ENCODE measurements at regions of chr12 and their contacts with region 1.

Region 1: DNA sequence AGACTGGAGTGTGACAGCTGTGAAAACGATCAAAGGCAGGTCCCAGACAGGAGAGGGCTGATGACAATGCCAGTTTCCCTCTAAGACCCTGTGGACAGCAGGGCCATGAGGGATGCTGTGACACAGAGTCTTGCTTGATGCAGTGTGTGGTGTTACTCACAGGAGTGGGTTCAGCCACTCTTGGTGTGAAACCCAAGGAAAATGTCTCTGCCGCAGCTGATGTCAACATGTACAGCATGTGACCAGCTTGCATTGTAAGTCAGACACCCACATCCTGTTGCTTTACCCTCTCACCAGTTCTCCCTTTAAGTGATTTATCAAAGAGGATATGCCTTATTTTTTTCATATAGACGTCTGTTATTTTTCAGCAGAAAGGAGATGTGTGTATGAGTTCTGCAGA is 268.6 kb downstream of the BTG1 start:
- DNase-seq: peak; percentile 75
- H3K4me3 Mint-ChIP-seq: peak overlapping the region; percentile 54
- H3K27ac Mint-ChIP-seq: peak overlapping the region; percentile 94
- H3K4me1 Mint-ChIP-seq: peaks cover 48% of the 10 kb centered on the region
- H3K27me3 Mint-ChIP-seq: no peaks in the 10 kb centered on the region

Region 2: GRCh38 chr12:91687052-91688017 is 189.7 kb before region 1 on chr12:
- intact Hi-C with region 1: loop called (anchors 1 kb)
- DNase-seq: no peak
- H3K4me3 Mint-ChIP-seq: no peak overlapping the region
- H3K27ac Mint-ChIP-seq: peak overlapping the region; percentile 66
- H3K4me1 Mint-ChIP-seq: peaks cover 24% of the 10 kb centered on the region
- H3K27me3 Mint-ChIP-seq: no peaks in the 10 kb centered on the region

Region 3: GRCh38 chr12:91852634-91853033 is 24.4 kb before region 1 on chr12:
- intact Hi-C with region 1: loop called (anchors 1 kb)
- DNase-seq: no peak
- H3K4me3 Mint-ChIP-seq: no peak overlapping the region
- H3K27ac Mint-ChIP-seq: no peak overlapping the region
- H3K4me1 Mint-ChIP-seq: peaks cover 14% of the 10 kb centered on the region
- H3K27me3 Mint-ChIP-seq: peaks cover 2% of the 10 kb centered on the region

Region 4: DNA sequence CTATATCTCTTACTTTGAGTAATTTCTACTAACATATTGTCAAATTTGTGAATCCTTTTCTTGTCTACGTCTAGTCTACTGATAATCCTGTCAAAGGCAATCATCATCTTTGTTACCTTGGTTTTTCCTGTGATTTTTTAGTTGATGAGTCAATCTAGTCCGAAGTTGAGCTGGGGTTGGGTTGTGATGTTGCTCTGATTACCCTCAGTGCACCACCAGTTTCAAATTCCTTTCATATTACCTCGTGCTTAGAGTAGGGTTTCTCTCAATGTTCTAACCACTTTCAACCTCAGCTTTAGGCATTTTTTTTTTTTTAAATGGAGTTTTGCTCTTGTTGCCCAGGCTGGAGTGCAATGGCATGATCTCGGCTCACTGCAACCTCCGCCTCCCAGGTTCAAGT is 81.8 kb after region 1 on chr12:
- intact Hi-C with region 1: no loop called
- DNase-seq: no peak
- H3K4me3 Mint-ChIP-seq: no peak overlapping the region
- H3K27ac Mint-ChIP-seq: no peak overlapping the region
- H3K4me1 Mint-ChIP-seq: peaks cover 4% of the 10 kb centered on the region
- H3K27me3 Mint-ChIP-seq: no peaks in the 10 kb centered on the region

Region 5: DNA sequence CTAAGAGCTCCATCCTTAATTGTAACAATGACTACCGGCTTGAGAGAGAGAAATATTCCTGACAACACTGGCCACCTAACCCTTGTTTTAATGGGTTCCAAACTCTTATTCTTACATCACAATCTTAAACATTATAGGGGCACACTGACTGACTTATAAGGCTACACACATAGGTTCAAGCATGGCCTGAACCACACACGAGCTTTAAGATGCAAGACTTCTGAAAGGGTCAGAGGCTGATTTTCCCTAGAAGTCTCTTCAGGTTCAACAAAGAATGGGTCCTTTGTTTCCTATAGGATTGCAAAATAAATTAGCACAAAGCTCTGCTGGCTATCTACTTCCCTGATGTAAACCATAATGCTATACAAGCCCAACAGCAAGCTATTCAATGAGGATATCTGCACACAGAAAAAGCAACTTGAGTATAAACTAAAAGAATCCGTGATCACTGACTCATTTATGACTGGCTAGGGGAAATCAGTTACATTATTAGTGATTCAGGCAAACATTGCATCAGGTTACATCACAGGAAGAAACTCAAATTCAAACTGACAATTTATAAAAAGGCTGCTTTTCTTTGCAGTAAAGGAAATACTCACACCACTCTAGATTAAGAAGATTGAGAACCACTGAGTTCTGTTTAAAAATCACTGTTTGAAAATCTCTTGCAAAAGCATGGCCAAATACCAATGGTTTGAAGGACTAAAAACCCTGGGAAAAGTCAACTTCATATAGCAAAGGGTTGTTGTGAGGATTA is 260.1 kb after region 1 on chr12:
- intact Hi-C with region 1: loop called (anchors 2 kb)
- DNase-seq: no peak
- H3K4me3 Mint-ChIP-seq: peak overlapping the region; percentile 98
- H3K27ac Mint-ChIP-seq: peak overlapping the region; percentile 87
- H3K4me1 Mint-ChIP-seq: peaks cover 78% of the 10 kb centered on the region
- H3K27me3 Mint-ChIP-seq: no peaks in the 10 kb centered on the region

Region 6: GRCh38 chr12:92593734-92594402 is 716.8 kb after region 1 on chr12:
- intact Hi-C with region 1: loop called (anchors 2 kb)
- DNase-seq: peak; percentile 66
- H3K4me3 Mint-ChIP-seq: peak overlapping the region; percentile 19
- H3K27ac Mint-ChIP-seq: peak overlapping the region; percentile 94
- H3K4me1 Mint-ChIP-seq: peaks cover 60% of the 10 kb centered on the region
- H3K27me3 Mint-ChIP-seq: no peaks in the 10 kb centered on the region